Testis (tissue), 5 donors: ENCODE measurements at regions of chr1 and their contacts with region 1.

Region 1: DNA sequence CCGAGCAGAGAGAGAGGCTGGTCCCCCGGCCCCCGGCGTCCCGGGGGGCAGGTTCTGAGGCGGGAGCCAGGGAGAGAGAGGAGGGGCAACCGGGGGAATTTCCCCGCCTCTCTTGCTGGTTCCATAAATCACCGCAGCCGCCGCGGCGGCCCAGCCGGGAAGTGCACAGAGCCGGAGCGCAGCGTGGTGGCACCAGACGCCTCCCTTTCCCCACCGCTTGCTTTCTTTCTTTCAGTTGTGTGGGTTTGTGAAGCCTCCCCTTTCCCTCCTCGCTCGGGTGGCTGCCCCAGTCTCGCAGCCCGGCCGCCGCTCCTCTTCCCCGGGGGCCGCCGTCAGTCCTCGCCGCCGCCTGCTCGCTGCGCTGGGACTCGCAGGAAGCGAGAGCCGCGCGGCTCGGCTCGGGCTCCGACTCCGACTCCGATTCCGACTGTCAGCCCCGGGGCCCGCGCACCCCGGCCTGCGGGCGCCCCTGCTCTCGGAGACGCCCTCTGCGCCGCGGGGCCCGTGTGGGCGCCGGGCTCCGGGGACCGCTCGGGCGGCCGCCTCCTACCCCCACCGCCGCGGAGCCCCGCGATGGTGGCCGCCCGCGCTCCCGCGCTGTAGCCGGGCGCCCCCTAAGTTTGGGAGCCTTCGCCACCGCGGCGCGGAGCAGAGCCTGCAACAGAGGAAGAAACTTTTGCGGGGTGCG is at the start of gene CACHD1:
- DNase-seq: peak; percentile 82
- H3K4me3 ChIP-seq: peak within 1 kb of the TSS; percentile 72 to 79
- H3K27ac ChIP-seq: peak within 1 kb of the TSS; percentile 55 to 90
- H3K4me1 ChIP-seq: peaks cover 6% of the 10 kb centered on the region
- H3K27me3 ChIP-seq: no peaks in the 10 kb centered on the region
- CTCF ChIP-seq: peak; percentile 31 to 40 (median 37)
- POLR2A ChIP-seq: no peak
- total RNA-seq, gene CACHD1: 8.3 to 10.3 TPM

Region 2: GRCh38 chr1:64539781-64540218 is 69.7 kb after region 1 on chr1:
- intact Hi-C with region 1: loop called (anchors 10 kb)
- DNase-seq: peak; percentile 71
- H3K4me3 ChIP-seq: no peak overlapping the region
- H3K27ac ChIP-seq: peak overlapping the region in 1 of 2 donors; percentile 50
- H3K4me1 ChIP-seq: peaks cover 19% of the 10 kb centered on the region
- H3K27me3 ChIP-seq: no peaks in the 10 kb centered on the region
- CTCF ChIP-seq: no peak
- POLR2A ChIP-seq: no peak

Region 3: DNA sequence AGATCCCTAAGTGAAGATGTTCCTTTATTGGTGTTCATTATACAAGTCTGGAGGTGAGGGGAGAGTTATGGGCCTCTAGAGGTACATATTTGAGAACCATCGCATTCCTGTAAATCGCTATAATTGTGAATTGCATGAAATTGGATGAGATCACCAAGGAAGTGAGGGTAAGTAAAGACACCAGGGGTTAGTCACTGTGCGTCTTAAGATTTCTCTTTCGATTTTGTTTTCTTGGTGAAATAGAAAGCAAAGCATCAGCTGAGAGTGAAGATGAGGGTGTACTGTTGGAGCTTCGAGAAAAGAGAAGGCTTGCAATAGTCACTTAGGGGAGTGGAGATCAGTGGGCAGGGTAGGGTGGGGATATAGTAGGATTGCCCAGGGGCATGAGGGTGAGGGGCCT is 356.9 kb after region 1 on chr1:
- intact Hi-C with region 1: loop called (anchors 5 kb)
- DNase-seq: no peak
- H3K4me3 ChIP-seq: no peak overlapping the region
- H3K27ac ChIP-seq: no peak overlapping the region
- H3K4me1 ChIP-seq: no peaks in the 10 kb centered on the region
- H3K27me3 ChIP-seq: no peaks in the 10 kb centered on the region
- CTCF ChIP-seq: no peak
- POLR2A ChIP-seq: no peak